ENCODE measurements at regions of chr2 and their contacts with region 1.

Region 1: DNA sequence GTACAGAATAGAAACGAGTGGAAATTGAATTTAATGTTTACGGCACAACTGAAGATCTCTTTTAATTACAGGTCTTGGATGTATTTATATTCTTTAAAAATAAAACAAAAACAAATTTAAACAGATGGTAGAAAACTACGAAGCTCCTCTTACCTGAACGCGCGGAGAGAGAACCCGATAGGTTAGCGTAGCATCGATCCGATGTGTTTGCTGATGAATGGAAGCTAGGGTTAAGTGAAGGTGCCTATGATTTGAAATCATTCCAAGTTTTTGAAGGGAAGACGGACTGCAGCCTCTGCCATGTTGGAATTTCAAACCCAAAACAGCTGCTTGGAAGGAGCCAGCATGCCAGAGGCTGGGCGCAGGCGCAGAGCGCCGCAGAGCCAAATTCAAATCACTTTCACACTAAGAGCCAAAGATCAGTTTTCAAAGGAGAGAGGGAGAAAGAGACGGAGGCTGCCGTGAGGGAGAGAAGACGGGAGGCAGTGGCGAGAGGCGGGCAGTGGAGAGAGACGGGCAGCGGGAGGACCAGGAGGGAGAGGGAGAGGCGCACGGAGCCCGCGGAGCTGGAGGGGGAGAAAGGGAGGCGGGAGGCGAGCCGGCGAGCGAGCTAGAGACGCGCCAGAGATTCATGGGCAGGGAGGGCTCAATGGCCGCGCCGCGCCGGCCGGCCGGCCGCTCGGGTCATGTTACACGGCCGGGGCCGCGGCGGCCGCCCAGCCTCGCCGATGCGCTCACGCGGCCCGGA is at the start of gene FIGN:
- DNase-seq: peak; percentile 76
- ATAC-seq: peak; percentile 78
- H3K4me3 ChIP-seq: peak within 1 kb of the TSS; percentile 87
- H3K27ac ChIP-seq: peak within 1 kb of the TSS; percentile 55
- H3K4me1 ChIP-seq: peaks cover 17% of the 10 kb centered on the region
- H3K27me3 ChIP-seq: no peaks in the 10 kb centered on the region
- CTCF ChIP-seq: no peak
- total RNA-seq, gene FIGN: 1.3 and 1.5 TPM in 2 replicates

Region 2: GRCh38 chr2:163471947-163472346 is 263.9 kb before region 1 on chr2:
- CTCF ChIA-PET with region 1: no interaction called
- POLR2A ChIA-PET with region 1: no interaction called
- intact Hi-C with region 1: loop called (anchors 5 kb)
- DNase-seq: peak; percentile 43
- ATAC-seq: peak; percentile 54
- H3K4me3 ChIP-seq: no peak overlapping the region
- H3K27ac ChIP-seq: no peak overlapping the region
- H3K4me1 ChIP-seq: no peaks in the 10 kb centered on the region
- H3K27me3 ChIP-seq: peaks cover 61% of the 10 kb centered on the region
- CTCF ChIP-seq: peak; percentile 57

Region 3: DNA sequence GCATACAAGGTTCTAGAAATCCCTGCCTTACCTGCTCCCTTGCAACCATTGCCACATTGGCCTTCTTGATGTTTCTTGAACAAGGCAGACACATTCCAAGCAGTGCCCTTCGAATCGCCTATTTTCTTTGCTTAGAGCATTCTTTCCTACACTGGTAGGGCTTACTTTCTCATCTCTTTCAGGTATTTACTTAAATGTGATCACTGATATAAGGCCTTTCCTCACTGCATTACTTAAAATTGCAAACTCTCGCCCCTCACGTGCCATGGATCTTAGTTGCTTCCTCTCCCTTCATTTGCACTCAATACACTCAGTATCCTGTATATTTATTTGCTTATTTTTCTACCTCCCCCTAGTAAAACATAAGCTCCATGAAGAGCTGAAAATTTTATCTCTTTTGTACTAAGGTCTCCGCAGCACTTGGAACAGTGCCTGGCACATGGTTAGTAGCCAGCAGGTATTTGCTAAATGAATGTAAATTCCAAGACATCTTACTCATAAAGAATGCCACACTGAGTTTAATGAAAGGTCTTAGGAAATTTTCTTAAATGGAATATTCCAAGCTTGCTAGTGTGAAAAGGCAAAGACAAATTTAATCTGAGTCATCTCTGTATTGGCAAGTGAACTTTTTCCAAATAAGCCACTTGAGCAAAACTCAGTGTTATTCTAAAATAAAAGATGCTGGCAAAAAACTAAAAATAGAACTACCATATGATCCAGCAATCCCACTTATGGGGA is 42.4 kb after region 1 on chr2:
- CTCF ChIA-PET with region 1: no interaction called
- POLR2A ChIA-PET with region 1: no interaction called
- intact Hi-C with region 1: loop called (anchors 1 kb)
- DNase-seq: peak; percentile 97
- ATAC-seq: peak; percentile 71
- H3K4me3 ChIP-seq: no peak overlapping the region
- H3K27ac ChIP-seq: peak overlapping the region; percentile 47
- H3K4me1 ChIP-seq: peaks cover 68% of the 10 kb centered on the region
- H3K27me3 ChIP-seq: no peaks in the 10 kb centered on the region
- CTCF ChIP-seq: no peak

Region 4: GRCh38 chr2:163919719-163920118 is 183.9 kb after region 1 on chr2:
- CTCF ChIA-PET with region 1: no interaction called
- POLR2A ChIA-PET with region 1: no interaction called
- intact Hi-C with region 1: loop called (anchors 5 kb)
- DNase-seq: no peak
- ATAC-seq: no peak
- H3K4me3 ChIP-seq: no peak overlapping the region
- H3K27ac ChIP-seq: no peak overlapping the region
- H3K4me1 ChIP-seq: no peaks in the 10 kb centered on the region
- H3K27me3 ChIP-seq: no peaks in the 10 kb centered on the region
- CTCF ChIP-seq: no peak